IMR-90 (cell line): ENCODE measurements at regions of chr11 and their contacts with region 1.

Region 1: DNA sequence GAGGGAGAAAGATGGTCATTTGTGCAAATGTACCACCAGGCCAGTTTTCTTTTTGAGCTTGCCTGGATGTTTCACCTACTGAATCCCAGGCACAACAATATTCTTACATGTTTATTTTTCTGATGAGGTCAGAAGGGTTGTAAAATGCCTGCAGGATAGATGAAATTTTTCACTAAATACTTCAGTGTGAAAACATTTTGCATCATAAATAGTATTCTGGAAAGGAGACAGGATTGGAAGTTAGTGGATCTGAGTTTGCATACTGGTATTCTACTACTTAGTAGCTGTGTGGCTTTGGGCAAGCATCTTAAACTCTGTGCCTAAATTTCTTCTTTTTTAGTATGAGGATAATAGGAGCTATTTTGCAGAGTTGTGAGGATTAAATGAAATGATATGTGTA is 24.8 kb downstream of the RNF169 start:
- DNase-seq: peak; percentile 76
- ATAC-seq: peak; percentile 79
- H3K4me3 ChIP-seq: no peak overlapping the region
- H3K27ac ChIP-seq: no peak overlapping the region
- H3K4me1 ChIP-seq: peaks cover 19% of the 10 kb centered on the region
- H3K27me3 ChIP-seq: no peaks in the 10 kb centered on the region
- CTCF ChIP-seq: no peak
- POLR2A ChIP-seq: no peak
- RAD21 ChIP-seq: no peak

Region 2: DNA sequence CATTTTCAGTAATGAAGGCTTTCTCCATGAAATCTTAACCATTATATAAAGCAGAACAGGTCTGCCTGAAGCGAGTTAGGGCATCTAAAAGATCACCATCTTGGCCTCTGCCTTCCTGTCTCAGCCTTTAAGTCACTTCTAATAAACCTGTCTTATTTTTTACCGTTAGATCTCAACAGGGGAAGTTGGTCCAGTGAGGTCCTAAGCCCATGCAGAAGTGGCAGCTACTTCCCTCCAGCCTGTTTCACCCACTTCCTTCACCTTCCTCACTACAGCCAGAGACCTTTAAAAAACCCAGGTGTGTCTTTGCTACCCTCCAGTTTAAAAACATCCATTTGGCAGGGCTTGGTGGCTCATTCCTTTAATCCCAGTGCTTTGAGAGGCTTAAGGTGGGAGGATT is 265.9 kb before region 1 on chr11:
- CTCF ChIA-PET with region 1: no interaction called
- POLR2A ChIA-PET with region 1: no interaction called
- dilution Hi-C with region 1: no loop called
- in situ Hi-C with region 1: no loop called
- intact Hi-C with region 1: no loop called
- DNase-seq: no peak
- ATAC-seq: no peak
- H3K4me3 ChIP-seq: no peak overlapping the region
- H3K27ac ChIP-seq: no peak overlapping the region
- H3K4me1 ChIP-seq: peaks cover 2% of the 10 kb centered on the region; the same call in 1 of the 2 replicates
- H3K27me3 ChIP-seq: peaks cover 16% of the 10 kb centered on the region
- CTCF ChIP-seq: no peak
- POLR2A ChIP-seq: no peak
- RAD21 ChIP-seq: no peak

Region 3: DNA sequence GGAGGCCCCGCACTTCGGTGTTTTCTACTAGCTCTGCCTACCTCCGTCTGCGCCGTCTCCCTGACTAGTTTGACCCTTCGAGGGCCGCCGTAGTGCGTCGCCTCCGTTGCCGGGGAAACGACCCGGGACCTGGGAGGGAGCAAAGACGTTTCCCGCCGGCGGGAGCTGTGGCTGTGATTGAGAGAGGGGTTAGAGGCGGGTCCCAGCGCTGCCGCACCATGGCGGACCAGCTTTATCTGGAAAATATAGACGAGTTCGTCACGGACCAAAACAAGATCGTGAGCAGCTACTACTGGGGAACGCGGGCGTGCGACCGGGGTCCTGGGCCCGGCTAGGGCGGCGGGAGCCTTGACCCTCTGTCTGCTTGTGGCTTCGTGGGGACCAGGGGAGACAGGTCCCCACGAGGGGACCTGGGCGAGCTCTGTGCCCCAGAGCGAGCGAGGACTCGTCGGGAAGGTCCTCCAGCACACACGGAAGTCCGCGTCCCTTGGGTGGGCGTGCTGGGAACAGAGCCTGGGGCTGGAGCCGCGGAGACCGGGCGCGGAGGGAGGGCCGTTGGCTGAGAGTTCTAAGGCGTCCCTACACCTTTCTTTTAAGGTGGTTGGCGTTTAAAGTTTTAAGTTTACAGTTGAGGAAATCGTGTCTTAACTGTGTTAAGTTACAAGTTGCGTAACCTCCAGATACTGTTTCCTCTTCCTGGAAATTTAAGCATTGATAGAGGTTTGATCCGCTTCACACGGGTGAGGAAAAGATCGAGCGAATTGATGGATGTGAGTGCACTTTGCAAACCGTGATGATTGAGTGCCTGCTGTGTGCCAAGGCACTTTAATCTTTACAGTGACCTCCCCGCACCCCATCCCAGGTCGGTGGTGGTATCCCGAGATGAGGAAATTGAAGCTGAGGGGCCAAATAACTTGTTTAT is 180.8 kb before region 1 on chr11 and contains the start of gene POLD3:
- CTCF ChIA-PET with region 1: no interaction called
- POLR2A ChIA-PET with region 1: interaction called, 14 read pairs
- dilution Hi-C with region 1: no loop called
- in situ Hi-C with region 1: no loop called
- intact Hi-C with region 1: no loop called
- DNase-seq: peak; percentile 81
- ATAC-seq: peak; percentile 99
- H3K4me3 ChIP-seq: peak within 1 kb of the TSS; percentile 65
- H3K27ac ChIP-seq: peak within 1 kb of the TSS; percentile 71
- H3K4me1 ChIP-seq: no peaks in the 10 kb centered on the region
- H3K27me3 ChIP-seq: no peaks in the 10 kb centered on the region; the same call in 1 of the 2 replicates
- CTCF ChIP-seq: no peak
- POLR2A ChIP-seq: peak; percentile 52
- RAD21 ChIP-seq: peak; percentile 8; the same call in 1 of the 2 replicates
- total RNA-seq, gene POLD3: 9.1 and 10.6 TPM in 2 replicates

Region 4: DNA sequence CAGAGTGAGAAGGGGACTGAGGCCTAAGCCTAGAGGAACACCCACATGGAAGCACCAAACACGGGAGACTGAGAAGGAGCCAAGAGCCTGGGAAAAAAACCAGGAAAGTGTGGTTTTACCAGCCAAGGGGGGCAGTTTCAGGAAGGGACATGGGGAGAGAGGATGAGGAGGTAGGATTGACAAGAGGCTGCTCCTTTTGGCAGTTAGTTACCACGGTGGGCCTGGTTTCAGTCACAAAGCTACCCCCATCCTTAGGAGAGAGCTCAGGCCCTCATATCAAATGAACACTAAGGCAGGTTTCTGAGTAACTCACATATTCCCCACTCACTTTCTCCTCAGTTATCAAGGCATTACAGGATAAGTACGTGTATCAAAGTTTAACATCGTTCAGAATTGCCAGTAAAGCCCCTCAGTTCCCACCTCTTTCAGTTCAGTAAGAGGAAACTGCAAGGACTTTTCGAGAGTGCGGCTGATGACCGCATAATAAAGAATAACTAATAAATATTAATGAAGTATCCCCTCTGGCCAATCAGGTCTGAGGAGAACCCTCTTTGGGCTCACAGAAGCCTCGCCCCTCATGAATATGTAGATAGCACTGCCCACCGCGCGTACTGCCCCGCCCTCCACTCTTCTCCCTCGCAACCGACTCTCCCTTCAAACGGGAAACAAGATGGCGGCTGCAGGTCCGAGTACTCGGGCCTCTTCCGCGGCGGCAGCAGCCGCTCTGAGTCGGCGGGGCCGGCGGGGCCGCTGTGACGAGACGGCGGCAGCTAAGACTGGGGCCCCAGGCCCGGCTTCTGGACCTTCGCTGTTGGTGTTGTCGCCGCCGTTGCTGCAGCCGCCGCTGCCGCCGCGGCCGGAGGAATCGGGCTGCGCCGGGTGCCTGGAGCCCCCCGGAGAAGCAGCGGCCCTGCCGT is 25.0 kb before region 1 on chr11 and contains the start of gene RNF169:
- CTCF ChIA-PET with region 1: no interaction called
- POLR2A ChIA-PET with region 1: no interaction called
- dilution Hi-C with region 1: no loop called
- in situ Hi-C with region 1: no loop called
- intact Hi-C with region 1: loop called (anchors 2 kb)
- DNase-seq: peak; percentile 96
- ATAC-seq: peak; percentile 99
- H3K4me3 ChIP-seq: peak within 1 kb of the TSS; percentile 90
- H3K27ac ChIP-seq: peak within 1 kb of the TSS; percentile 85
- H3K4me1 ChIP-seq: peaks cover 13% of the 10 kb centered on the region
- H3K27me3 ChIP-seq: no peaks in the 10 kb centered on the region
- CTCF ChIP-seq: no peak
- POLR2A ChIP-seq: peak; percentile 92
- RAD21 ChIP-seq: no peak
- total RNA-seq, gene RNF169: 23.3 and 28.1 TPM in 2 replicates

Region 5: DNA sequence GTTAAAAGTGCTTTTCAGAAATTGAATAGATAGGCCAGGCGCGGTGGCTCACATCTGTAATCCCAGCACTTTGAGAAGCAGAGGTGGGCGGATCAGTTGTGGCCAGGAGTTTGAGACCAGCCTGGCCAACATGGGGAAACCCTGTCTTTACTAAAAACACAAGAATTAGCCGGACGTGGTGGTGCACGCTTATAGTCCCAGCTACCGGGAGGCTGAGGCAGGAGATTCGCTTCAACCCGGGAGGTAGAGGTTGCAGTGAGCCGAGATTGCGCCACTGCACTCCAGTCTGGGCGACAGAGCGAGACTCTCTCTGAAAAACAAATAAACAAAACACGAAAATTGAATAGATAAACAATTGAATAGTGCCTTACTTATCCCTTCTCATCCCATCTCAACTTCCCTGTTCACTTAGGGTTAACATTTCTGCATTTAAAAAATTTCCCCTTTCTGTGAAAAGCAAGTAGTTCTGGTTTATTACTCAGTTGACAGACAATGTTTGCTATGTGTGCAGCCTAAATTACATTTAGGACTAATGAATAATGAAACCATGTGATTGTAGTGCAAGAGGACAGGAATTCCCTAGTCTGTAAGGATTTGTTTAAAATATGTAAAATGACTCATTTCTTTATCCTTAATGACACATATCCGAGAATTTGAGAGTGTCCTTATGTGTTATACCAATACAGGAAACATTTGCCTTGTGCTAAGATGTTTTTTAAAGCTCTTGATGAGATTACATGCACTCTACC is 18.8 kb before region 1 on chr11:
- CTCF ChIA-PET with region 1: no interaction called
- POLR2A ChIA-PET with region 1: no interaction called
- dilution Hi-C with region 1: no loop called
- in situ Hi-C with region 1: no loop called
- intact Hi-C with region 1: loop called (anchors 2 kb)
- DNase-seq: peak; percentile 96
- ATAC-seq: peak; percentile 82
- H3K4me3 ChIP-seq: peak overlapping the region; percentile 6; the same call in 1 of the 2 replicates
- H3K27ac ChIP-seq: peak overlapping the region; percentile 72
- H3K4me1 ChIP-seq: peaks cover 13% of the 10 kb centered on the region
- H3K27me3 ChIP-seq: no peaks in the 10 kb centered on the region
- CTCF ChIP-seq: no peak
- POLR2A ChIP-seq: no peak
- RAD21 ChIP-seq: no peak

Region 6: DNA sequence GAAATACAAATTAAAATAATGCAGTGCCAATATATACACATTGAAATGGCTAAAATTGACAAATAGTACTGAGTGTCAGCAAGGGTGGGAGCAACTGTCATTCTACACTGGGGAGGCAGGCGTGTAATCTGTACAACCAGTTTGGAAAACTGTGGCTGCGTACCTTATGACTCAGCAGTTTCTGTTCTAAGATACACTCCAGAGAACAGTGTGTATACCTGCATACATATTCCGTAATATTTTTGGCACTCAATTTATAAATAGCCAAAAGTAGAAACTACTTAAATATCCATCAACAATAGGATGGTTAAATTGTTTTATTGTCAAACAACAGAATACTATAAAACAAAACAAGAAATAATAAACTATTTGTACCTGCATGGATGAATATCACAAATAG is 32.8 kb after region 1 on chr11:
- CTCF ChIA-PET with region 1: no interaction called
- POLR2A ChIA-PET with region 1: no interaction called
- dilution Hi-C with region 1: no loop called
- in situ Hi-C with region 1: no loop called
- intact Hi-C with region 1: loop called (anchors 5 kb)
- DNase-seq: no peak
- ATAC-seq: no peak
- H3K4me3 ChIP-seq: no peak overlapping the region
- H3K27ac ChIP-seq: no peak overlapping the region
- H3K4me1 ChIP-seq: no peaks in the 10 kb centered on the region
- H3K27me3 ChIP-seq: no peaks in the 10 kb centered on the region
- CTCF ChIP-seq: no peak
- POLR2A ChIP-seq: no peak
- RAD21 ChIP-seq: no peak